Common myeloid progenitor, CD34-positive (primary cell): ENCODE measurements at regions of chr2 and their contacts with region 1.

Region 1: GRCh38 chr2:204177977-204178540 is 241.5 kb downstream of the ICOS start:
- DNase-seq: peak; percentile 29 to 70 (median 54)
- H3K4me3 ChIP-seq: no peak overlapping the region
- H3K27ac ChIP-seq: no peak overlapping the region
- H3K4me1 ChIP-seq: no peaks in the 10 kb centered on the region
- H3K27me3 ChIP-seq: peaks cover 0 to 3% (median 0%) of the 10 kb centered on the region in 5 experiments

Region 2: GRCh38 chr2:203683932-203684556 is 494.0 kb before region 1 on chr2:
- CTCF ChIA-PET with region 1: no interaction called
- POLR2A ChIA-PET with region 1: no interaction called
- DNase-seq: no peak
- H3K4me3 ChIP-seq: no peak overlapping the region
- H3K27ac ChIP-seq: no peak overlapping the region
- H3K4me1 ChIP-seq: peaks cover 0 to 14% (median 4%) of the 10 kb centered on the region in 4 experiments
- H3K27me3 ChIP-seq: no peaks in the 10 kb centered on the region

Region 3: DNA sequence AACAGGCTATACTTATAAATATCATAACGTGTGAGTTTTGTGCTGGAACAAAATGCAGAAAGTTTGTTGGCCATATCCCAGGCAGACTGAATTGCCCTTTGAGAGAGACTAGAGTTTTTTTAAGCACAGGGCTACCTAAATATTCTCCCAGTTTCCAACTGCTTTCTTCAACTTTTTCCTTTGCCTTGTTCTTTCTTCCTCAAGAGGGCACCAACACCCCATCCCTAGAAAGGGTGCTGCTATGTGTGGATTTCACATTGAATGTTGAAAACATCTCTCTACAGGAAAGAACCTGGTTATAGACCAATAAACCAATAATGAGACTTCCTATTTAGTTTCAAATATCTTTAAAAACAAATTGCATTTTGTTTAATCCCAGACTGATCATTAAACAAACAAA is 153.6 kb before region 1 on chr2:
- CTCF ChIA-PET with region 1: interaction called, 11 read pairs
- POLR2A ChIA-PET with region 1: no interaction called
- DNase-seq: peak; percentile 49 to 70 (median 65)
- H3K4me3 ChIP-seq: no peak overlapping the region
- H3K27ac ChIP-seq: no peak overlapping the region
- H3K4me1 ChIP-seq: peaks cover 0 to 10% (median 4%) of the 10 kb centered on the region in 4 experiments
- H3K27me3 ChIP-seq: no peaks in the 10 kb centered on the region

Region 4: GRCh38 chr2:204108330-204108751 is 69.7 kb before region 1 on chr2:
- CTCF ChIA-PET with region 1: interaction called, 22 read pairs
- POLR2A ChIA-PET with region 1: no interaction called
- DNase-seq: peak; percentile 56 to 83 (median 81)
- H3K4me3 ChIP-seq: no peak overlapping the region
- H3K27ac ChIP-seq: no peak overlapping the region
- H3K4me1 ChIP-seq: peaks cover 22 to 38% (median 30%) of the 10 kb centered on the region in 4 experiments
- H3K27me3 ChIP-seq: peaks cover 0 to 1% (median 0%) of the 10 kb centered on the region in 5 experiments

Region 5: DNA sequence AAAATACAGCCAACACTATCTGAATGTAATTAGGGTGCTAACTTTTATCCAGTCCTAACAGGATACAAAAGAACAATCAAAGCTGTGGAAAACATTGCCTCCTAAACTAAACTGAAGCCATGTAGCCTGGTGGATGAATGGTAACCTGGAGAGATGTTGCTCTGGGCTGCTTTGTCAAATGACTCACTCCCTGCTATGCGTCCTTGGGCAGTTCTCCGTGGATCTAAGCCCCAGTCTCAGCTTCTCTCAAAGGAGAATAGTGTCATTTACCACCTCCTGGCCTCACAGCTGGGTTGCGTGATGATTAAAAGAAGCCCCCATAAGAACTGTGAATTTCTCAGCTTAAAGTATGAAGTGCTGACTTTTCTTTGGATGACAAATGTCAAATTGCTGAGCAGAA is 37.8 kb before region 1 on chr2:
- CTCF ChIA-PET with region 1: interaction called, 18 read pairs
- POLR2A ChIA-PET with region 1: interaction called, 7 read pairs
- DNase-seq: no peak
- H3K4me3 ChIP-seq: no peak overlapping the region
- H3K27ac ChIP-seq: no peak overlapping the region
- H3K4me1 ChIP-seq: no peaks in the 10 kb centered on the region
- H3K27me3 ChIP-seq: peaks cover 0 to 4% (median 0%) of the 10 kb centered on the region in 5 experiments

Region 6: GRCh38 chr2:204152616-204153015 is 25.4 kb before region 1 on chr2:
- CTCF ChIA-PET with region 1: interaction called, 13 read pairs
- POLR2A ChIA-PET with region 1: no interaction called
- DNase-seq: no peak
- H3K4me3 ChIP-seq: no peak overlapping the region
- H3K27ac ChIP-seq: no peak overlapping the region
- H3K4me1 ChIP-seq: no peaks in the 10 kb centered on the region
- H3K27me3 ChIP-seq: peaks cover 0 to 2% (median 0%) of the 10 kb centered on the region in 5 experiments

Region 7: GRCh38 chr2:204191574-204192335 is 13.7 kb after region 1 on chr2:
- CTCF ChIA-PET with region 1: interaction called, 33 read pairs
- POLR2A ChIA-PET with region 1: no interaction called
- DNase-seq: no peak
- H3K4me3 ChIP-seq: no peak overlapping the region
- H3K27ac ChIP-seq: no peak overlapping the region
- H3K4me1 ChIP-seq: no peaks in the 10 kb centered on the region
- H3K27me3 ChIP-seq: no peaks in the 10 kb centered on the region